ENCODE measurements at regions of chr10 and their contacts with region 1.

Region 1: GRCh38 chr10:80064120-80064886 is 14.2 kb upstream of the TMEM254 start:
- DNase-seq: no peak
- H3K4me3 Mint-ChIP-seq: no peak overlapping the region
- H3K27ac Mint-ChIP-seq: no peak overlapping the region
- H3K4me1 Mint-ChIP-seq: no peaks in the 10 kb centered on the region
- H3K27me3 Mint-ChIP-seq: no peaks in the 10 kb centered on the region
- CTCF ChIP-seq: no peak

Region 2: DNA sequence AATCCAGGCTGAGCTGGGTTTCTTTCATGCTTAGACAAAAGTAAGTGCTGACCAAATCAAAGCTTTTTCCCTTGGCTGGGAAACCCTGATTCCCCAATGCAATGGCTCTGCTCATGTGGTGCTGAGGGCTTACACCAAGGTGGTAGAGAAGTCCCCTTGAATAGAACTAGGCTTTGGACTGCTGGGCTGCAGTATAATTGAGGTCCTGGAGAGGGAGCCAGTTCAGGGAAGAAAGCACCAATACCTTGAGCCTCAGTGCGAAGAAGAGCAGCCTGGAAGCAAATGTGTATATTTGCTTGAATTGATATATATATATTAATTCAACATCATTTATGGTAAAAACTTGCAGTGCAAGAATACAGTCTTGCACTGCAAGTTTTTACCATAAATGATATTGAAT is 1639.6 kb before region 1 on chr10:
- CTCF ChIA-PET with region 1: no interaction called
- POLR2A ChIA-PET with region 1: no interaction called
- intact Hi-C with region 1: no loop called
- DNase-seq: peak; percentile 42
- H3K4me3 Mint-ChIP-seq: no peak overlapping the region
- H3K27ac Mint-ChIP-seq: no peak overlapping the region
- H3K4me1 Mint-ChIP-seq: no peaks in the 10 kb centered on the region
- H3K27me3 Mint-ChIP-seq: peaks cover 50% of the 10 kb centered on the region
- CTCF ChIP-seq: peak; percentile 49

Region 3: DNA sequence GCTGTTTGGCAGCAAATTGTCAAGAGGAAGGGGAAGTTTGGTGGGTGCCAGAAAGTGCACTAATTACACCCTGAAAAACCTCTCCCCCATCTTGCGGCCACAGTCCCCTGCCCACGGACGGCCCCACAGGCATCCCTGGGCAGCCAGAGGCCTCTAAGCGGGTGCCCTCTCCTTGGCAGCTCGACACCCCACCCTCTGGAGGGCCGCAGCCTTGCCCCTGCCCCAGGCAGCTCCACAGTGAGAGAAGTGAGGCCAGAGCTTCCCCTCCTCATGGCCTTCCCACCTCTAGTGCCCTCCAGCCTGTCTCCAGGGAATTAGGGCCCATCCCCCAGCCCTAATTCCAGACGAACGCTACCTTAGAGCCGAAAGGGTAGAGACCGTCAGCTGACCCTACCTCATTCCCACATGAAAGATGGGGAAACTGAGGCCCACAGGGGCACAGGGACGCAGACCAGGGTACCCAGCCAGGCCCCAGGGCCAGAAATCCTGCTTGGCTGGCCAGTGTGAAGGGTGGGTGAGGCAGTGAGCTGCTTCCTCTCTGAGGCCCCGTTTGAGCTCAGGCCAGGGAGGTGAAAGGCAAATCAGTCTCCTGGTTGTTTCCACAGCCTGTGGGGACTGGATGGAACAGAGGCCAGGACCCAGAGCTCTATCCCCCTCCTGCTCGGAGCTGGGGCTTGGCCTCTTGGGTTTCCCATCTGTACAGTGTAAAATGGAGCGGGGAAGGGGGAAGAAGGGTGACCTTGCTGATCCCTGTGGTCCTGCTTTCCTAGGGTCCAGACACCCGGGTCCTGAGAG is 628.8 kb before region 1 on chr10:
- CTCF ChIA-PET with region 1: no interaction called
- POLR2A ChIA-PET with region 1: no interaction called
- intact Hi-C with region 1: no loop called
- DNase-seq: no peak
- H3K4me3 Mint-ChIP-seq: no peak overlapping the region
- H3K27ac Mint-ChIP-seq: peak overlapping the region; percentile 19
- H3K4me1 Mint-ChIP-seq: peaks cover 6% of the 10 kb centered on the region
- H3K27me3 Mint-ChIP-seq: no peaks in the 10 kb centered on the region
- CTCF ChIP-seq: no peak

Region 4: DNA sequence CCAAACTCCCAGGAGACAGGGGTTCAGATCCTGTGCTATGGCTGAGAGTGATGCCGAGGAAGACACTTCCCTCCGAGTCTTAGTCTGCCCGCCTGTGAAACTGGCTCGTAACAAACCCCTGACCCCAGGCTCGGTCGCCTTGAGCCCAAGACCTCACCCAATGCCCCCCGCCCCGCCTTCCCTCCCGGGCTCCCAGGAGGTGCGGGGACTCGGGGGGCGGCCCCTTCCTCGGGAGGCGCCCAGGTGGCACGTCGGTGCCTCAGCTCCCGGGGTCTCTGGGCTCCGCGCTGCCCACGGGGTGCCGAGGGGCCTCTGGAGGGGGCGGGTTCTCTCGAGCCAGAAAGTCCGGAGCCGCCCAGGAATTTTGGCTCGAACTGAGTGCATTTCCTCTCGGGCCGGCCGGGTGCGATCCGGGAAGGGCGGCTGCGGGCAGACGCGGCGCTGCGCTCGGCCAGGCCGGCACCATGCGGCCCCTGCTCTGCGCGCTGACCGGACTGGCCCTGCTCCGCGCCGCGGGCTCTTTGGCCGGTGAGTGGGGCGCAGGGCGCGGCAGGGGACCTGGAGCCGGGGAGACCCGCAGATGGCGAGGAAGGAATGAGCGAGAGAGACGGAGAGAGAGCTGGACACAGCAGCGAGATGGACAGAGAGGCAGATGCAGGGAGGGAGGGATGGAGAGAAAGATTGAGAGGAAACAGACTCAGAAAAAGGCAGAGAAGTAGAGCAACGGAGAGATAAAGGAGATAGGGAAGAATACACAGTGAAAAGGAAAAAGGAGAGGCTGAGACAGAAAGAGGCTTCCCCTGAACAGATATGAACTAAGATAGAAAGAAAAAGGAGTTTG is 68.2 kb after region 1 on chr10 and contains the start of gene PLAC9:
- CTCF ChIA-PET with region 1: interaction called, 7 read pairs
- POLR2A ChIA-PET with region 1: interaction called, 3 read pairs
- intact Hi-C with region 1: loop called (anchors 1 kb)
- DNase-seq: no peak
- H3K4me3 Mint-ChIP-seq: peak within 1 kb of the TSS; percentile 17
- H3K27ac Mint-ChIP-seq: no peak within 1 kb of the TSS
- H3K4me1 Mint-ChIP-seq: peaks cover 11% of the 10 kb centered on the region
- H3K27me3 Mint-ChIP-seq: peaks cover 14% of the 10 kb centered on the region
- CTCF ChIP-seq: no peak
- total RNA-seq, gene PLAC9: 0.93 and 1.0 TPM in 2 replicates

Region 5: DNA sequence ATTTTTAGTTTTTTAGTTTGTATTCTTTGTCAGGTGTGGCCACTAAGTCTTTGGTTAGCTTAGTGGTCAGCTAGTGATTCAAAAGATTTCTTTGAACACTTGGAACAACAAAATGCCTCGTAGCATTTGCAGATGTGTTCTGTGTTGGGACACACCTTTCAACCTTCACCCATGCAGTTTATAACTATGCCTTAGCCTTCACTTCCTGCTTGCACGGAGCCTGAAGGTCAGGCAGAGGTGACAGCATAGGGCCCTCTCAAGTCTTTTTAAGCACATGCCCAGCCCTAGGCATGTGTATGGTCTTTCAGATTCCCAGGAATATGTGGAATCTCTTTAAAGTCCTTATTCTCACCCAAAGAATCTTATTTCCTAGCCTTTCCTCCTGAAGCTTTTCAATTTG is 85.9 kb after region 1 on chr10:
- CTCF ChIA-PET with region 1: no interaction called
- POLR2A ChIA-PET with region 1: no interaction called
- intact Hi-C with region 1: no loop called
- DNase-seq: no peak
- H3K4me3 Mint-ChIP-seq: no peak overlapping the region
- H3K27ac Mint-ChIP-seq: no peak overlapping the region
- H3K4me1 Mint-ChIP-seq: peaks cover 14% of the 10 kb centered on the region
- H3K27me3 Mint-ChIP-seq: no peaks in the 10 kb centered on the region
- CTCF ChIP-seq: no peak